Activated B cell treated with CpG ODN at 0.5 μM for 24 hours (primary cell): ENCODE measurements at regions of chr10 and their contacts with region 1.

Region 1: DNA sequence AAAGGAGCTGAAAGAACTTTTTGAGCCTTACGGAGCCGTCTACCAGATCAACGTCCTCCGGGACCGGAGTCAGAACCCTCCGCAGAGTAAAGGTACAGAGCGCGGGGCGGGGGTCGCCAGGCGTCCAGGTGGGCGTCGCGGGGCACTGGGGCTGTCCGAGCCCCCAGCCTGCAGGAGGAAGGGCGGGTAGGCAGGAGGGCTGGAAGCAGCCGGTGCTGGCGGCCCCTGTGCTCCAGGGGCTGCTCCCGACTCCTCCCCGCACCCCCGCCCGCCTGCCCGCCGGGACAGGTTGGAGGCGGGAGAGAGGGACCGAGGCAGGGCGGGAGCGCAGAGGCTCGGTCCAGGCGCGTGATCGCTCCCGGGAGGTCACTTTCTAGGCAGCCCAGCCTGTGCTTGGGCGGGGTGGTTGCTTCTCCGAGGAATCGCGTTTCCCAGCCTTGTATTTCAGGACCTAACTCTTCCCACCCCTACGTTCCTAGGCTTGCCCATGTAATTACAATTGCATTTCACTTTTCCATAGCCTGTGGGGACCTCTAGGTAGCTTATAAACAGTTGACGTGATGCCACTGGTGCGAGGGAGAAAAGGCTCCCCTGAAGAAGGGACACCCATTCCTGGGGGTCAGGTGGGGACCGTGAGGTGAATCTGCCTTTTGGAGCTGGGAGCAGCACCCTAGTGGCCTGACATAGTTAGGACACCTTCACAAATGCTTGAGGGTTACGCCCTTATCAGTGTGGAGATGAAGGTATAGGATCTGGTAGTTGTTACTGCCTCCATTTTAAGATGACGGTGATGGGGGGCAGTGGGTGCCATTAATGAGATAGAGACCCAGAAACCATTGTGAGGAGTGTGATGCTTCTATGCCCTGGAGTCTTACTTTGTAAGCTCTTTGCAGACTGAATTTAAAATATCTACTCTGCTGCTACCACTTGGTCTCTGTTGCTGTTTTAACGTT is 148.2 kb downstream of the CELF2 start:
- DNase-seq: no peak
- ATAC-seq: peak; percentile 55
- H3K4me3 Mint-ChIP-seq: no peak overlapping the region
- H3K27ac Mint-ChIP-seq: peak overlapping the region; percentile 99
- H3K4me1 Mint-ChIP-seq: peaks cover 51% of the 10 kb centered on the region
- H3K27me3 Mint-ChIP-seq: no peaks in the 10 kb centered on the region
- CTCF ChIP-seq: no peak

Region 2: DNA sequence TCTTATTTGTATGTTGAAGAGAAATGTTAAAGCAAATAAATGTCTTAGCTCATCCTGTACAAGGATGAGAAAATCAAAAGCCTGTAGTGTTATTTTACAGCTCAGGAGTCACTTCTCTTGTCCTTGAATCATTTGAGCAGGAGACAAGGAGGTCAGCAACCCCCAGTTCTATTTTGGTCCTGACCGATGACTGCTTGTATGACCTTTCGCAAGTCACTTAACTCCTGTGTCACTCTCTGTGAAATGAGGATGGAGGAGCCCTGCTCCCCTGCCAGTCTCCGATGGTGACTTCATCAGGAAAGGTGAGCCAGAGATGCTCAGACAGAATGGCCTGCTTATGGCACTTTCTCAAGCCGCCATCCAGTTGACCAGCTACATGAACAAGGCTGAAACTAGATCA is 47.2 kb before region 1 on chr10:
- CTCF ChIA-PET with region 1: interaction called, 12 read pairs
- POLR2A ChIA-PET with region 1: interaction called, 11 read pairs
- intact Hi-C with region 1: loop called (anchors 1 kb)
- DNase-seq: no peak
- ATAC-seq: no peak
- H3K4me3 Mint-ChIP-seq: no peak overlapping the region
- H3K27ac Mint-ChIP-seq: no peak overlapping the region
- H3K4me1 Mint-ChIP-seq: peaks cover under 1% of the 10 kb centered on the region
- H3K27me3 Mint-ChIP-seq: no peaks in the 10 kb centered on the region
- CTCF ChIP-seq: no peak

Region 3: DNA sequence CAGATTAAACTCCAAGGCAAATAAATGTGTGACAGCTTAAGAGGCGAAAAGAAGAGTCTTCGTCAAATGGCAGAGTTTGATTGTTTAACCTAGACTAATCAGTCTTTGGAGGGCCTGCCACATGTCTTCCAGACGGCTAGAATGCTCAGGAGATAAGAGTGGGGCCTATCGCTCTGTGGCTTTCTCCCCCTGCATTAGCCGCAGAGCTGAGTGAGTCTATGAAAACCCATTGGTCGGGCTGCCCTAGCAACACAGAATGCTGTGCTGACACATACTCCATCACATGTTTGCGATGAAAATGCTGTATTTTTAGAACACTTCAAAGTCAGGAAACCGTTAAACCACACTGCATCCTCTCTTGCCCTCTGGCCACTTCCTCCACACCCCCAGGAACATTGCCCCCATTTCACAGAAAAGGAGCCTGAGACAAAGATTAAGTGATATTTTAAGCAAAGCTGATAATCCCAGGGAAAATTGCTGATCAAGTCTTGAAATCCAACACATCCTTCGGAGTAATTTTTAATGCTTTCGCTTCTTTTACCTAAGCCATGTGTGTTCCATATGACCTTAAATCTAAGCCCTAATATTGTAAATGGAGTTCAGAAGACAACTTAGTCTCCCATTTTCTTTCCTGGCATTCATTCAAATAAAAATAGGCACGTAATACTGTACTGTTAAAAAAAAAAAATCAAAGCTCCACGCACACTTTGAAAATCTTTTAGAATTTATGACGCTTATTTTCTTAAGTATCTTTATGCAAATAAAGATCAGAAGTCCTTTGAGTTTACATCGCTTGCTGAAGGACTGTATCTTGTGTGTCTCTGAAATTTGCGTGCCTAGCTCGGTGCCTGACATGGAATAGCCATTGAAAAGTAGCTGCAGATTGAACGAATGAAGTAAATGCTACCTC is 13.0 kb after region 1 on chr10:
- CTCF ChIA-PET with region 1: interaction called, 19 read pairs
- POLR2A ChIA-PET with region 1: interaction called, 151 read pairs
- intact Hi-C with region 1: loop called (anchors 1 kb)
- DNase-seq: peak; percentile 43
- ATAC-seq: peak; percentile 75
- H3K4me3 Mint-ChIP-seq: peak overlapping the region; percentile 80
- H3K27ac Mint-ChIP-seq: peak overlapping the region; percentile 94
- H3K4me1 Mint-ChIP-seq: peaks cover 30% of the 10 kb centered on the region
- H3K27me3 Mint-ChIP-seq: no peaks in the 10 kb centered on the region
- CTCF ChIP-seq: no peak

Region 4: GRCh38 chr10:11225935-11226334 is 60.1 kb after region 1 on chr10:
- CTCF ChIA-PET with region 1: interaction called, 13 read pairs
- POLR2A ChIA-PET with region 1: interaction called, 75 read pairs
- intact Hi-C with region 1: loop called (anchors 1 kb)
- DNase-seq: no peak
- ATAC-seq: peak; percentile 8
- H3K4me3 Mint-ChIP-seq: no peak overlapping the region
- H3K27ac Mint-ChIP-seq: peak overlapping the region; percentile 96
- H3K4me1 Mint-ChIP-seq: peaks cover 85% of the 10 kb centered on the region
- H3K27me3 Mint-ChIP-seq: no peaks in the 10 kb centered on the region
- CTCF ChIP-seq: no peak

Region 5: DNA sequence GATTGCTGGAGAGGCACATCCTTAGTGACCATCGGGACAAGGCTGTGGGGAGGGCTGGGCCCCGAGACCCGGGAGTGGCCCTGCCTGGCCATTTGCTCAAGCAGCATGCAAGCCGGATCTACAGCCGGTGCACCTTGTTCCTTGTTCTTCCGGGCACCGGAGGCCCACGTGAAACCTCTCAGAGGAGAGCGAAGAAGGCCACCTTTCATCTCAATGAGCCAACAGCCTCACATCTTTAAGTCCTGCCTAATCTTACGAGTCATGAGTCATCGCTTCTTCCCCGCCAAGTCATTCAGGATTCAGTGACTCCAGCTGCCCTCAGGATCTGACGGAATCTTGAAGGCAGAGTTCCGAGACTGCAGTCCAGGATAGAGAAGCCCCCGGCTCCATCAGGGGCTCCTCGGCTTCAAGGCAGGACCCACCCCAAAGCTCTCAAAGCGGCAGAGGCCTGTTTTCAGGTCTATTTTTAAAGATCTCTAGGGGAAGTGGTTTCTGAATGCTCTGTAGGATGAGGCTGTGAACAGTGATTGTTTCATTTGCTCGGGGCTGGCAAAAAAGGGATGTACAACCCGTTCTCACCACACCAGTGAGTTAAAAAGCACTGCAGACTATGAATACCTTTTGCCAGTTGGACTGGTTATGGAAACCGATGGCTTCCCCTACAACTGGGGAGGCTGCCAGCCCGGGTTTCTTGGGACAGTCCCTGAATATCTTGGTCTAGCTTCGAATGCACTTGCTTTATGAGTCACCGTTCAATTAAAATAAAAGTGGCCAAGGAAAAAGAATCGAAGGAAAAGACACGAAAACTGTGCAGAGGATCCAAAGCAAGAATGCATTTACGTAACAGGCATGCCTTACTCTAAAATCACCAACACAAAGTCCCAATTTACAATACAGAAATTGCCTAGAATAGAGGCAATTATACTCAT is 519.1 kb after region 1 on chr10:
- CTCF ChIA-PET with region 1: no interaction called
- POLR2A ChIA-PET with region 1: interaction called, 4 read pairs
- intact Hi-C with region 1: loop called (anchors 2 kb)
- DNase-seq: peak; percentile 69
- ATAC-seq: peak; percentile 76
- H3K4me3 Mint-ChIP-seq: peak overlapping the region; percentile 90
- H3K27ac Mint-ChIP-seq: peak overlapping the region; percentile 100
- H3K4me1 Mint-ChIP-seq: peaks cover 91% of the 10 kb centered on the region
- H3K27me3 Mint-ChIP-seq: no peaks in the 10 kb centered on the region
- CTCF ChIP-seq: no peak